CD4-positive, alpha-beta memory T cell (primary cell): ENCODE measurements at regions of chr17 and their contacts with region 1.

Region 1: DNA sequence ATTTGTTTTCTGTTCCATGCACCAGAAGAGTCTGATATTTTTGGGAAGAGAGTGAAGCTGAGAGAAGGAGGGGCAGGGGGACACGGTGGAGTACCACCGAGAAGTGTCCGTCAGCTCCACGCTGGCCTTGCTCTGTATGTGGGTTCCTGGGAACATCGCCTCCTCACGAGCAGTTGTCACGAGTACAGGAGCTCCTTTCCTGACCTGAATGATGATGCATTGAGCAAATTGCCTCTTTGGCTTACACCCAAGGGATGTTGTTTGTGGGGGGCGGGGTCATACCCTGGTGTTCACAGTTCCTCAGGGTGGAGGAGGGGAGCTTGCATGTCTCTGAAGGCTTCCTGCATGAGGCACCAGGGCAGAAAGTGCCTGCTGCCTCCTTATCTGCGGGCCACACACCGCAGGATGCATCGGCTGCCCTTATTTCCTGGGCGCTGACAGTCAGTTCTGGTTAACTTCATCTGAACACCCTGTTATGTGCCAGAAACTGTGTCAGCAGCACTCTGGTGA is 36.2 kb downstream of the RGS9 start:
- DNase-seq: peak; percentile 77 to 88 (median 82)
- H3K4me3 ChIP-seq: peak overlapping the region in 1 of 2 donors; percentile 11
- H3K4me3 Mint-ChIP-seq: no peak overlapping the region
- H3K27ac ChIP-seq: peak overlapping the region; percentile 43
- H3K27ac Mint-ChIP-seq: peak overlapping the region in 1 of 7 donors; percentile 90
- H3K4me1 ChIP-seq: peaks cover 44% of the 10 kb centered on the region
- H3K4me1 Mint-ChIP-seq: peaks cover 17 to 31% (median 27%) of the 10 kb centered on the region in 4 donors
- H3K27me3 ChIP-seq: no peaks in the 10 kb centered on the region
- H3K27me3 Mint-ChIP-seq: peaks cover 0 to 1% of the 10 kb centered on the region in 2 donors

Region 2: GRCh38 chr17:64765191-64765958 is 408.0 kb before region 1 on chr17:
- CTCF ChIA-PET with region 1: no interaction called
- POLR2A ChIA-PET with region 1: no interaction called
- intact Hi-C with region 1: no loop called
- DNase-seq: no peak
- H3K4me3 ChIP-seq: no peak overlapping the region
- H3K4me3 Mint-ChIP-seq: no peak overlapping the region
- H3K27ac ChIP-seq: no peak overlapping the region
- H3K27ac Mint-ChIP-seq: peak overlapping the region in 3 of 7 donors; percentile 6 to 53 (median 9)
- H3K4me1 ChIP-seq: no peaks in the 10 kb centered on the region
- H3K4me1 Mint-ChIP-seq: peaks cover 0 to 13% (median 2%) of the 10 kb centered on the region in 4 donors
- H3K27me3 ChIP-seq: no peaks in the 10 kb centered on the region
- H3K27me3 Mint-ChIP-seq: no peaks in the 10 kb centered on the region

Region 3: DNA sequence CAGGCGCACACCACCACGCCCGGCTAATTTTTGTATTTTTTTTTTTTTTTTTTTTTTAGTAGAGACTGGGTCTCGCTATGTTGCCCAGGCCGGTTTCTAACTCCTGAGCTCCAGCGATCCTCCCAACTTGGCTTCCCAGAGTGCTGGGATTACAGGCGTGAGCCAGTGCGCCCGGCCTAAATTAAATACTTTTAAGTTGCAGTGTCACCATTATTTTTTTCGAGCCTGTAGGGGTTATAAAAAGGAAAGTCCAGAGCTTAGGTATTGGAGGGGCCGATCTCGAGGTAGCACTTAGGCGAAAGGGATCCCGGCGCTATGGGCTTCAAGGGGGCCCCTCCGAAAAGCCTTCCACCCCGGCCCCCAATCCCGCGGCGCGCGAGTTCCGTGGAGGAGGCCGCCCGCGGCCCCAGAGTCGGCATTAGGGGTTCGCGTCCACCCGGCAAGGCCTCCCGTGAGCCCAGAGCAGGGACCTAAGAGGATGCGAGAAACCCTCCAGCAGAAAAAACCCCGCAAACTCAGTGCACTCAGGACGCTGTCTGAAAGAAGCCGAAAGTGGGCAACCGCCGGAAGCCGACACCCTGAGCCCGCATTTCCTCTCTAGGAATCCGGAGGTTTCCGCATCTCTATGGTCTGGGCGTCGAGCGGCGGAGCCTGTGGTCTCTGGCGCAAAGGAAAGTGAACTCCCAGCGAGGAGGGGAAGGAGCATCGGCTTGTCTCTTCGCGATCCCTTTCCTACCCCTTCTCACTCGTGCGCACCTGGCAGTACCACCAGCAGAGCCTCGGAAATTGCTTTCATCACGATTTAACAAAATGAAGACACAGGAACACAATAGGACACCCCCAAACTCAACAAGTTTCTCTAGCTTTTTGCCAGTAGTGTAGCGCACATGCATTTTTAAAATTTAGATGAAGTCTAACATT is 50.2 kb before region 1 on chr17:
- CTCF ChIA-PET with region 1: no interaction called
- POLR2A ChIA-PET with region 1: interaction called, 15 read pairs
- intact Hi-C with region 1: no loop called
- DNase-seq: peak; percentile 86 to 90 (median 88)
- H3K4me3 ChIP-seq: peak overlapping the region; percentile 4 to 57
- H3K4me3 Mint-ChIP-seq: peak overlapping the region; percentile 87 to 96 (median 92)
- H3K27ac ChIP-seq: peak overlapping the region; percentile 53
- H3K27ac Mint-ChIP-seq: peak overlapping the region; percentile 80 to 99 (median 99)
- H3K4me1 ChIP-seq: peaks cover 20% of the 10 kb centered on the region
- H3K4me1 Mint-ChIP-seq: peaks cover 11 to 27% (median 20%) of the 10 kb centered on the region in 4 donors
- H3K27me3 ChIP-seq: no peaks in the 10 kb centered on the region
- H3K27me3 Mint-ChIP-seq: peaks cover 0 to 5% of the 10 kb centered on the region in 2 donors

Region 4: GRCh38 chr17:65147955-65148354 is 25.4 kb before region 1 on chr17:
- CTCF ChIA-PET with region 1: no interaction called
- POLR2A ChIA-PET with region 1: no interaction called
- intact Hi-C with region 1: no loop called
- DNase-seq: no peak
- H3K4me3 ChIP-seq: no peak overlapping the region
- H3K4me3 Mint-ChIP-seq: no peak overlapping the region
- H3K27ac ChIP-seq: no peak overlapping the region
- H3K27ac Mint-ChIP-seq: no peak overlapping the region
- H3K4me1 ChIP-seq: no peaks in the 10 kb centered on the region
- H3K4me1 Mint-ChIP-seq: peaks cover 0 to 1% (median 0%) of the 10 kb centered on the region in 4 donors
- H3K27me3 ChIP-seq: no peaks in the 10 kb centered on the region
- H3K27me3 Mint-ChIP-seq: no peaks in the 10 kb centered on the region

Region 5: DNA sequence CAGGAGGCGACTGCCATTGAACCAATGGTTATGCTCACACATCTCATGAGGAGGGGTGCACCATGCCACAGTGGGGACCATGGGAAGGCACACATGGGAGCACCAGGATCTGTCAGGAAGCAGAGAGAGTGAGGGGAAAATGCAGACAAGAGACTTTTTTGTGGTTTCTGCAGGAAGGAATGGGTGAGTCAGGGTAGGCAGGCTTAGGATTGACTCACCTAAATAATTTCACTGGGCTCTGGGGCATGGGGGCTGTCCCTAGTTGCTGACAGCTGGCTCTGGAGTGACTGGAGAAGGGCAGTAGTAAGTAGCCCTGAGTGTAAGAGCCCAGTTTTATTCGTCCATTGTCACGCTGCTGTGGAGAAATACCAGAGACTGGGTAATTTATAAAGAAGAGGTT is 185.7 kb after region 1 on chr17:
- CTCF ChIA-PET with region 1: no interaction called
- POLR2A ChIA-PET with region 1: no interaction called
- intact Hi-C with region 1: no loop called
- DNase-seq: no peak
- H3K4me3 ChIP-seq: no peak overlapping the region
- H3K4me3 Mint-ChIP-seq: no peak overlapping the region
- H3K27ac ChIP-seq: no peak overlapping the region
- H3K27ac Mint-ChIP-seq: no peak overlapping the region
- H3K4me1 ChIP-seq: no peaks in the 10 kb centered on the region
- H3K4me1 Mint-ChIP-seq: peaks cover 0 to 4% (median under 1%) of the 10 kb centered on the region in 4 donors
- H3K27me3 ChIP-seq: no peaks in the 10 kb centered on the region
- H3K27me3 Mint-ChIP-seq: peaks cover 0 to 5% of the 10 kb centered on the region in 2 donors